ENCODE measurements at regions of chr4 and their contacts with region 1.

Region 1: DNA sequence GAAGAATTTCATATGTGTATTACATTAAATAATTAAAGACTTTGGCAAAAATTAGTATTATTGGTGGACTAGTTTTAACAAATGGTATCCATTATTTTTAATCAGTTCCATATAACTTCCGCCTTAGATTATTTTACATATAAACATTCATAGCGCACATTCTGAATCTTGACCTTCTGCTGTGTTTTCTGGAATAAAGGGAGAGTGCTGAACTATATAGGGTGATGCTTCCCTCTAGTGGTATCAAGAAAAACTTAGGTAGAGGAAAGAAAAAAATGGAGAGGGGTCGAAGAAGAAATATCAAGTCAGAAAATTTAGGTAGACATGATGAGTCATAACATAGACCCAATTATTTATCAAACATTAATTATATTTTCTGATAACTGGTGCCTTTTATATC is 155.6 kb upstream of the PACRGL start:
- DNase-seq: peak; percentile 8
- ATAC-seq: peak; percentile 67; the same call in 1 of the 2 replicates
- H3K4me3 ChIP-seq: no peak overlapping the region
- H3K27ac ChIP-seq: no peak overlapping the region
- H3K4me1 ChIP-seq: no peaks in the 10 kb centered on the region
- H3K27me3 ChIP-seq: no peaks in the 10 kb centered on the region
- CTCF ChIP-seq: peak; percentile 43 to 54 (median 46); a peak in 4 of 6 replicates
- POLR2A ChIP-seq: no peak
- RAD21 ChIP-seq: peak; percentile 64

Region 2: GRCh38 chr4:18689308-18690115 is 1855.1 kb before region 1 on chr4:
- CTCF ChIA-PET with region 1: no interaction called
- POLR2A ChIA-PET with region 1: no interaction called
- RAD21 ChIA-PET with region 1: no interaction called
- intact Hi-C with region 1: loop called (anchors 10 kb)
- DNase-seq: peak; percentile 44
- ATAC-seq: 0 out of 2 replicates have a peak, but pooled peaks have one; percentile 46
- H3K4me3 ChIP-seq: no peak overlapping the region
- H3K27ac ChIP-seq: no peak overlapping the region
- H3K4me1 ChIP-seq: no peaks in the 10 kb centered on the region
- H3K27me3 ChIP-seq: no peaks in the 10 kb centered on the region; the same call in 1 of the 2 replicates
- CTCF ChIP-seq: peak; percentile 59 to 87 (median 76)
- POLR2A ChIP-seq: no peak
- RAD21 ChIP-seq: peak; percentile 81

Region 3: DNA sequence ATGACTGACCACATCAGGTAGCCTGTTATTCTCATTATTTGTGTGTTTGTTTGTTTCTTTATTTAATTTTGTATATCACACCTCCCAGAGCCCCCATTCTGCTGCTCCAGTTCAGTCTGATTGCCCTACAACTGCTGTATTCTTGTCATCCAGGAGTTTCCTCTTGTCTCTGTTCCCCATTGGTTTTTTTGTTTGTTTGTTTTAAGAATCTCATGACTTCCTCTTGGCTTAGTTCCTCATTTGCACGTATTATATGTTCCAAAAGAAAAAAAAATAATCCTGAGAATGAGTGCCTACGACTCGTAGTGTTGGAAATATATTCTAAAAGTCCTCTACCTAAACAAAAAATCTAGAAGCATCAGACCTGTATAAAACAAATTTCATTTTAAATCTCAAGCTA is 435.3 kb before region 1 on chr4:
- CTCF ChIA-PET with region 1: no interaction called
- POLR2A ChIA-PET with region 1: no interaction called
- RAD21 ChIA-PET with region 1: no interaction called
- intact Hi-C with region 1: no loop called
- DNase-seq: no peak
- ATAC-seq: no peak
- H3K4me3 ChIP-seq: no peak overlapping the region
- H3K27ac ChIP-seq: no peak overlapping the region
- H3K4me1 ChIP-seq: no peaks in the 10 kb centered on the region
- H3K27me3 ChIP-seq: no peaks in the 10 kb centered on the region
- CTCF ChIP-seq: no peak
- POLR2A ChIP-seq: no peak
- RAD21 ChIP-seq: no peak

Region 4: DNA sequence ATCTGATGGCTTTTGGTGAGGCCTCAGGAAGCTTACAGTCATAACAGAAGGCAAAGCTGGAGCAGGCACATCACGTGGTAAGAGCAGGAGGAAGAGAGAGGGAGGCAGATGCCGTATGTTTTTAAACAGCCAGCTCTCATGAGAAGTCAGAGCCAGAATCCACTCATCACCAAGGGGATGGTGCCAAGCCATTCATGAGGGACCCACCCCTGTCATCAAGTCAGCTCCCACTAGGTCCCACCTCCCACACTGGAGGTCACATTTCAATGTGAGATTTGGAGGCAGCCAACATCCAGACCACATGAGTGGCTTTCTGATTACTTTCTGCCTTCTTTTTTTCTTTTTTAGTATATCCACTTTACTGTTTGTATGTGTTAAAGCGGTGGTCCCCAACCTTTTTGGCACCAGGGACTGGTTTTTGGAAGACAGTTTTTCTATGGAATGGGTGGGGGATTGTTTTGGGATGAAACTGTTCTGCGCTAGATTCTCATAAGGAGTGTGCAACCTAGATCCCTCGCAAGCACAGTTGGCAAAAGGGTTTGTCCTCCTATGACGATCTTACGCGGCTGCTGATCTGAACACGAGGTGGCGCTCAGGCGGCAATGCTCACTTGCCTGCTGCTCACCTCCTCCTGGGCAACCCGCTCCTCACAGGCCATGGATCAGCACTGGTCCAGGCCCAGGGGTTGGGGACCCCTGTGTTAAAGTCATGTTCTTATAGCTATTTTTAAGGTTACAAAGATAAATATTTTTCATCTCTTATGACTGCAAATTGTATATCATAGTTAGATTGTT is 231.2 kb before region 1 on chr4:
- CTCF ChIA-PET with region 1: no interaction called
- POLR2A ChIA-PET with region 1: no interaction called
- RAD21 ChIA-PET with region 1: no interaction called
- intact Hi-C with region 1: loop called (anchors 5 kb)
- DNase-seq: peak; percentile 24
- ATAC-seq: peak; percentile 99
- H3K4me3 ChIP-seq: no peak overlapping the region
- H3K27ac ChIP-seq: no peak overlapping the region
- H3K4me1 ChIP-seq: no peaks in the 10 kb centered on the region
- H3K27me3 ChIP-seq: no peaks in the 10 kb centered on the region
- CTCF ChIP-seq: peak; percentile 35 to 76 (median 65); a peak in 5 of 6 replicates
- POLR2A ChIP-seq: no peak
- RAD21 ChIP-seq: peak; percentile 32; the same call in 1 of the 2 replicates

Region 5: GRCh38 chr4:20422398-20422797 is 122.2 kb before region 1 on chr4:
- CTCF ChIA-PET with region 1: interaction called, 6 read pairs
- POLR2A ChIA-PET with region 1: no interaction called
- RAD21 ChIA-PET with region 1: no interaction called
- intact Hi-C with region 1: loop called (anchors 1 kb)
- DNase-seq: peak; percentile 47
- ATAC-seq: peak; percentile 90
- H3K4me3 ChIP-seq: no peak overlapping the region
- H3K27ac ChIP-seq: no peak overlapping the region
- H3K4me1 ChIP-seq: 0 out of 4 replicates have a peak, but pooled peaks cover 0 to 2% of the 10 kb centered on the region in 2 experiments
- H3K27me3 ChIP-seq: 0 out of 2 replicates have a peak, but pooled peaks cover 7% of the 10 kb centered on the region
- CTCF ChIP-seq: peak; percentile 38 to 55 (median 50); a peak in 5 of 6 replicates
- POLR2A ChIP-seq: no peak
- RAD21 ChIP-seq: peak; percentile 60

Region 6: DNA sequence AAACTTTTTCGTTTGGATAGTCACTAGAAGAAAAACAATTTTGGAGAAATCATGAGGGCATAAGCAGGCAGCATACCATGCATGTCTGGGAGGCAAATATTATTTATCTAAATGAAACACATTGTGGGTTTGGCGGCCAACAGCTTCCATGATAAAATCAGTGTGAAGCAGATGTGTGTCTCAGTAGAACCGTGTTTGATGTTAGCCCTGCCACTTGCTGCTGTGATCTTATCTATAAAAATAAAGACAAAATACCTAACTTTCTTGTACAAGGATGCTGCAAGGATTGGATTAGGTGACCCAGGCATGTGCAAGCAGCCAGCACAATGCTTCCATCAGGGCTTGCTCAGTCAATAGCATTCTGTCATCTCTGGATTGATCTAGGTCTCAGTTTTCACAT is 497.1 kb after region 1 on chr4:
- CTCF ChIA-PET with region 1: no interaction called
- POLR2A ChIA-PET with region 1: no interaction called
- RAD21 ChIA-PET with region 1: no interaction called
- intact Hi-C with region 1: no loop called
- DNase-seq: no peak
- ATAC-seq: no peak
- H3K4me3 ChIP-seq: no peak overlapping the region
- H3K27ac ChIP-seq: no peak overlapping the region
- H3K4me1 ChIP-seq: no peaks in the 10 kb centered on the region
- H3K27me3 ChIP-seq: no peaks in the 10 kb centered on the region
- CTCF ChIP-seq: no peak
- POLR2A ChIP-seq: no peak
- RAD21 ChIP-seq: no peak

Measured in HCT116 (cell line).